Left colon (tissue), 2 donors: ENCODE measurements at regions of chr20 and their contacts with region 1.

Region 1: GRCh38 chr20:50189681-50190582 is 698 bp upstream of the CEBPB start:
- DNase-seq: peak; percentile 87 to 94
- ATAC-seq: peak; percentile 67

Region 2: GRCh38 chr20:50020288-50020687 is 169.6 kb before region 1 on chr20:
- intact Hi-C with region 1: no loop called
- DNase-seq: no peak
- ATAC-seq: no peak

Region 3: GRCh38 chr20:50379049-50379990 is 189.4 kb after region 1 on chr20:
- intact Hi-C with region 1: loop called in 1 of 2 experiments (anchors 10 kb)
- DNase-seq: peak; percentile 89 to 92
- ATAC-seq: peak; percentile 71

Region 4: GRCh38 chr20:50460460-50461267 is 270.7 kb after region 1 on chr20:
- intact Hi-C with region 1: loop called (anchors 2 to 5 kb)
- DNase-seq: peak; percentile 80 to 92
- ATAC-seq: peak; percentile 89